Panc1 (cell line): ENCODE measurements at regions of chr17 and their contacts with region 1.

Region 1: DNA sequence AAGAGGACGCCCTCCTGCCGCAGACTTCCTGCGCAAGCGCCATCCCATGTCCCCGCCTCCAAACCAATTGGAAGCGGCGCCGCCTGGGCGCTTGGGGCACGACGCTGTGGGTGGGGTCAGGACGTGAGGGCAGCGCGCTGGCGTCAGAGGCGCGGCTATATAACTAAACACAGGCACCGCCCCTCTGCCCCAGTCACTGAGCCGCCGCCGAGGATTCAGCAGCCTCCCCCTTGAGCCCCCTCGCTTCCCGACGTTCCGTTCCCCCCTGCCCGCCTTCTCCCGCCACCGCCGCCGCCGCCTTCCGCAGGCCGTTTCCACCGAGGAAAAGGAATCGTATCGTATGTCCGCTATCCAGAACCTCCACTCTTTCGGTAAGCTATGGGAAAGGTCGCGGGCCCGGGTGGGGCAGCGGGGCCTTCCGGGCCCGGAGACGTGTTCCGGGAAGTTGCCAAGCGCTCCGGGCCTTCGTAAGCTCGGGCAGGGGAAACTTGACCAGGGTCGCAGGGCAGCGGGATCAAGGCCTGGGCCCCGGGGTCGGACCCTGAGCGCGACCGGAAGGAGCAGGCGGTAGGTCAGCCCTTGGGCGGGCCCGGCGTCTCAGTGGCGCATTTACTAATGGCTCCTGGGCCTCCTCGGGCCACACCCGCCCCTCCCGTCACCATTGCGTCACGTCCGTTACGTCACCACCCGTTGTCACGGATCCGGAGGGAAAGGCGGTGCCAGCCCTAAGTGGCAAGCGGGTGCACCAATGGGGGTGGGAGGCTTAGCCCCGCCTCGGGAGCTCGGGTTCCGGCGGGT is at the start of gene EIF1:
- DNase-seq: peak; percentile 96
- ATAC-seq: peak; percentile 89
- H3K4me3 ChIP-seq: peak within 1 kb of the TSS; percentile 91 to 99
- H3K27ac ChIP-seq: peak within 1 kb of the TSS; percentile 100
- H3K4me1 ChIP-seq: peaks cover 22% of the 10 kb centered on the region
- H3K27me3 ChIP-seq: no peaks in the 10 kb centered on the region
- CTCF ChIP-seq: no peak
- total RNA-seq, gene EIF1: 747 TPM

Region 2: DNA sequence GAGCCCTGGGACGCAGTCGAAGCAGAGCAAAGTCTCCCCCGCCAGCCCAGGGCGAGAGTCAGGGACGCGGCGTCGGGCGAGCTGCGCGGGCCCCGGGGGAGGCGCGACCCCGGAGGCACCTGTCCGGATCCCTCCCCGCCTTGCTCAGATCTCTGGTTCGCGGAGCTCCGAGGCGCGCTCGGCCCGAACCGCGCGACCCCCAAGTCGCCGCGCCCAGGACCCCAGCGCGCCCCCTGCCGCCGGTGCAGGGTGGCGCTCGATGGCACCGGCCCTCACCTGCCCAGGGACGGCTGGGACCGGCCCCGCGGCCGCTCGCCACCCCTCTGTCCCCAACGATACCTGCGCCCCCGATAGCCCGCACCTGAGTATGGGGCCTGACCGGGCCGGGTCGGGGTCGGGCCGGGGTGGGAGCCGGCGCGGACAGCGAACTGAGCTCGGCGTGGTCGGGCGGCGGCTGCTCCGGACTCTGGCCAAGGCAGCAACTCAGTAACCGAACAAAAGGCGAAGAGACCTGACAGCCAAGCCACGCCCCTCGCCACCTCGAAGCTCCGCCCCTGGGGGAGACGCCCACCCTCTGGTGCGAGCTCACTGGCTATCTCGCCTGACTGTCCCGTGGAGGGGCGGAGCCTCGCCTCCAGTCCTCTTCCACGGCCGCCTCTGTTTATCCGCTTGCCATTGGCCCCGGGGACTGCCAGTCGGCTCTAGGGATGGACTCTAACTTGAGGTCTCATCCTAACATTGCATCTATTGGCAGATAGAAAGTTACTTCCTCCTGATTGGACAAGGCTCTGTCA is 97.5 kb after region 1 on chr17 and contains the start of gene JUP:
- CTCF ChIA-PET with region 1: no interaction called
- POLR2A ChIA-PET with region 1: interaction called, 11 read pairs
- in situ Hi-C with region 1: no loop called
- intact Hi-C with region 1: no loop called
- DNase-seq: peak; percentile 91
- ATAC-seq: peak; percentile 98
- H3K4me3 ChIP-seq: peak within 1 kb of the TSS; percentile 70 to 81
- H3K27ac ChIP-seq: peak within 1 kb of the TSS; percentile 85
- H3K4me1 ChIP-seq: peaks cover 37% of the 10 kb centered on the region
- H3K27me3 ChIP-seq: no peaks in the 10 kb centered on the region
- CTCF ChIP-seq: peak; percentile 96
- total RNA-seq, gene JUP: 352 TPM